ENCODE measurements at regions of chr3 and their contacts with region 1.

Region 1: DNA sequence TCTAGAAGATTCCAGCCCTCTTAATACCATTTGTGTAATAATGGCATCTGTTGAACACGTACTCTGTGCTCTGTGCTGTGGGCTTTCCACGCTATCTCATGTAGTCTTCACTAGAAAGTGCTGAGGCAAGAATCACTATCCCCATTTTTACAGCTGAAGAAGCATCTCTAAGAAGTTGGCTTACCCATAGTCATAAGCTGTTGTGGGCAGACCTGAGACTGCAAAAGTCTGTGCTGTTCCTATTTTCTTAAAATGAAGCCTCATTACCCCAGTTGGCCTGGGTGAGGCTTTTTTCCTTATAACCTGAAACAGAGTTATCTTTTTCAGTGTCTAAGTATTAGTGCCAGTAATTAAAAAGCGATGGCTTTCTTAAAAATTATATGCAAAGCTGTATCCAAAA is 58.5 kb downstream of the ERC2 start:
- DNase-seq: no peak
- ATAC-seq: no peak
- H3K4me3 ChIP-seq: no peak overlapping the region
- H3K27ac ChIP-seq: no peak overlapping the region
- H3K4me1 ChIP-seq: no peaks in the 10 kb centered on the region
- H3K27me3 ChIP-seq: no peaks in the 10 kb centered on the region
- CTCF ChIP-seq: no peak
- POLR2A ChIP-seq: no peak
- RAD21 ChIP-seq: no peak

Region 2: DNA sequence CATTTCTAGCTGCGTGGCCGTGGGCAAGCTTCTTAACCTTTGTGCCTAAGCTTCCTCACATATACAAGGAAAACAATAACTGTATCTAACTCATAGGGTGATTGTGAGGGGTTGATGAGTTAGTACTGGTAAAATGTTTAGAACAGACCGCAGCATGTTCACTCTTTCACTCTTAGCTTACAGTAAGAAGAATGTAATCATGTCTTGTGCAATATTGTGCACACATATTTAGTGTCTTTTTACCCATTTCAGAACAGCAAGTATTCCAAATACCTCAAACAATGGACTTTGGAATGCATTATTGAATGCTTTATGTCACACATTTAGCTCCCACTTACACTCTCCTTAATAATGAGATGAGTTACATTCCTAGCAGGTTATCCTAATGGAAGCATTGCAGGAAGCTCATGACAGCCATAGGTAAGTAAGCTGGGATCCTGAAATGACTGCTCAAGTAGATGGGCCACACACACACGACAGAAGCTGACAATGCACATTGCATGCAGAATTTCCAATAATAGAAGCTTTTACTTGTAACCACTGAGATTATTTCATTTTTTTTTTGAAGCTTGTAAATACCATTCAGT is 453.8 kb before region 1 on chr3:
- CTCF ChIA-PET with region 1: no interaction called
- POLR2A ChIA-PET with region 1: no interaction called
- dilution Hi-C with region 1: no loop called
- in situ Hi-C with region 1: no loop called
- intact Hi-C with region 1: no loop called
- DNase-seq: peak; percentile 3
- ATAC-seq: peak; percentile 82
- H3K4me3 ChIP-seq: no peak overlapping the region
- H3K27ac ChIP-seq: peak overlapping the region; percentile 50; the same call in 1 of the 2 replicates
- H3K4me1 ChIP-seq: peaks cover 4% of the 10 kb centered on the region; the same call in 1 of the 2 replicates
- H3K27me3 ChIP-seq: peaks cover under 1% of the 10 kb centered on the region; the same call in 1 of the 2 replicates
- CTCF ChIP-seq: no peak
- POLR2A ChIP-seq: no peak
- RAD21 ChIP-seq: no peak

Region 3: GRCh38 chr3:56357266-56357665 is 52.5 kb before region 1 on chr3:
- CTCF ChIA-PET with region 1: no interaction called
- POLR2A ChIA-PET with region 1: interaction called, 12 read pairs
- dilution Hi-C with region 1: no loop called
- in situ Hi-C with region 1: no loop called
- intact Hi-C with region 1: no loop called
- DNase-seq: no peak
- ATAC-seq: no peak
- H3K4me3 ChIP-seq: no peak overlapping the region
- H3K27ac ChIP-seq: no peak overlapping the region
- H3K4me1 ChIP-seq: no peaks in the 10 kb centered on the region
- H3K27me3 ChIP-seq: no peaks in the 10 kb centered on the region
- CTCF ChIP-seq: no peak
- POLR2A ChIP-seq: no peak
- RAD21 ChIP-seq: no peak

Region 4: GRCh38 chr3:56556908-56557830 is 147.4 kb after region 1 on chr3 and contains the start of gene CCDC66:
- CTCF ChIA-PET with region 1: no interaction called
- POLR2A ChIA-PET with region 1: no interaction called
- dilution Hi-C with region 1: no loop called
- in situ Hi-C with region 1: no loop called
- intact Hi-C with region 1: no loop called
- DNase-seq: peak; percentile 90
- ATAC-seq: peak; percentile 100
- H3K4me3 ChIP-seq: peak within 1 kb of the TSS; percentile 56
- H3K27ac ChIP-seq: peak within 1 kb of the TSS; percentile 67
- H3K4me1 ChIP-seq: no peaks in the 10 kb centered on the region
- H3K27me3 ChIP-seq: no peaks in the 10 kb centered on the region
- CTCF ChIP-seq: peak; percentile 60
- POLR2A ChIP-seq: peak; percentile 77; the same call in 1 of the 2 replicates
- RAD21 ChIP-seq: 0 out of 2 replicates have a peak, but pooled peaks have one; percentile 18
- total RNA-seq, gene CCDC66: 9.1 and 12.2 TPM in 2 replicates